Natural killer cell (primary cell): ENCODE measurements at regions of chr9 and their contacts with region 1.

Region 1: GRCh38 chr9:110217656-110218099 is 9.7 kb upstream of the C9orf152 start:
- DNase-seq: peak in 1 of 2 donors; percentile 49
- ATAC-seq: no peak
- H3K4me3 ChIP-seq: no peak overlapping the region
- H3K4me3 Mint-ChIP-seq: no peak overlapping the region
- H3K27ac ChIP-seq: no peak overlapping the region
- H3K27ac Mint-ChIP-seq: no peak overlapping the region
- H3K4me1 ChIP-seq: no peaks in the 10 kb centered on the region
- H3K4me1 Mint-ChIP-seq: no peaks in the 10 kb centered on the region
- H3K27me3 ChIP-seq: no peaks in the 10 kb centered on the region
- H3K27me3 Mint-ChIP-seq: no peaks in the 10 kb centered on the region
- CTCF ChIP-seq: peak; percentile 93

Region 2: GRCh38 chr9:109574068-109574882 is 643.4 kb before region 1 on chr9:
- intact Hi-C with region 1: loop called (anchors 10 kb)
- DNase-seq: peak in 1 of 2 donors; percentile 33
- ATAC-seq: no peak
- H3K4me3 ChIP-seq: no peak overlapping the region
- H3K4me3 Mint-ChIP-seq: no peak overlapping the region
- H3K27ac ChIP-seq: no peak overlapping the region
- H3K27ac Mint-ChIP-seq: no peak overlapping the region
- H3K4me1 ChIP-seq: no peaks in the 10 kb centered on the region
- H3K4me1 Mint-ChIP-seq: no peaks in the 10 kb centered on the region
- H3K27me3 ChIP-seq: no peaks in the 10 kb centered on the region
- H3K27me3 Mint-ChIP-seq: peaks cover 3 to 4% of the 10 kb centered on the region in 2 donors
- CTCF ChIP-seq: peak; percentile 35

Region 3: GRCh38 chr9:109903515-109904138 is 314.1 kb before region 1 on chr9:
- intact Hi-C with region 1: loop called (anchors 1 kb)
- DNase-seq: peak in 1 of 2 donors; percentile 80
- ATAC-seq: peak in 2 of 3 donors; percentile 29 to 64
- H3K4me3 ChIP-seq: no peak overlapping the region
- H3K4me3 Mint-ChIP-seq: no peak overlapping the region
- H3K27ac ChIP-seq: no peak overlapping the region
- H3K27ac Mint-ChIP-seq: no peak overlapping the region
- H3K4me1 ChIP-seq: no peaks in the 10 kb centered on the region
- H3K4me1 Mint-ChIP-seq: no peaks in the 10 kb centered on the region
- H3K27me3 ChIP-seq: no peaks in the 10 kb centered on the region
- H3K27me3 Mint-ChIP-seq: peaks cover 4 to 20% of the 10 kb centered on the region in 2 donors
- CTCF ChIP-seq: peak; percentile 53

Region 4: GRCh38 chr9:110069326-110070248 is 148.1 kb before region 1 on chr9:
- intact Hi-C with region 1: no loop called
- DNase-seq: no peak
- ATAC-seq: peak in 2 of 3 donors; percentile 21 to 82
- H3K4me3 ChIP-seq: no peak overlapping the region
- H3K4me3 Mint-ChIP-seq: no peak overlapping the region
- H3K27ac ChIP-seq: no peak overlapping the region
- H3K27ac Mint-ChIP-seq: no peak overlapping the region
- H3K4me1 ChIP-seq: peaks cover 8% of the 10 kb centered on the region
- H3K4me1 Mint-ChIP-seq: no peaks in the 10 kb centered on the region
- H3K27me3 ChIP-seq: no peaks in the 10 kb centered on the region
- H3K27me3 Mint-ChIP-seq: no peaks in the 10 kb centered on the region
- CTCF ChIP-seq: no peak

Region 5: DNA sequence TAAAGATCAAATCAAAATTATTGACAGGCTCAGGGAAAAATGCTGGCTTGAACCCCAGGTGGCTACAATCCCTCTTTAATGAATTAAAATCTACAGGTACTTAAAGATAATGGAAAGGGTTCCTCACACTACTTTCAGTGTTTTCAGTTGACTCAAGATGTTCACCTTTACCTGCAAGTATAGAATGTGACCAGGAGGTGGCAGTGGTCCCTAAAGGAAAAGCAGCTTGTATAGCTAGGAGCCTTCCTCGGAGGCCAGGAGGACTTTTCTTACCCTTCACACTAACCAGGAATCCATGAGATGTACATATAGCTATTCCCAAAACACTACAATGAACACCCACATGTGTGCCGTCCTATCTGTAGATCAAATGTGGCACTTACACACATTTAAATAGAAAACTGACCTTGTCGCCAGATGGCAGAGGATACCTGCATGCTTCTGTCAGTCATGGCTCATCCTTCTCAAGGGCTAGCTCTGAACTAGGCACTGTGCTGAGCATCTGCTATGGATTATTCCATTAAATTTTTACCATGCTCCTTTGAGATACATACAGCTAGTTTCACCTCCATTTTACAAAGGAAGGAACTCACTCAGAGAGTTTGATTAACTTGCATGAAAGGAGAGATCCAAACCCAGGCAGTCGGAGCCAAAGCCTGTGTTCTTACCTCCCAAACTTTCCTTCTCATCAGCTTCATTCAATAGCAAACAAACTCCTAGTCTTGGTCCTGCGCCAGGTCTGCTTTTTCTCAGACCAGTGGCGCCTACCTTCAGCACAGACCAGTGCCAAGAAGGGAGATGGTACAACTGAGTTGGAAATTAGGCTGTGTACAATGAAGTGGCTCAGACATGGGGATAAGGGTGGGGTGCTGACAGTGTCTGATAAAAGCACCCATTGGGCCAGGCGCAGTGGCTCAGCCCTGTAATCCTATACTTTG is 34.2 kb before region 1 on chr9:
- intact Hi-C with region 1: loop called (anchors 2 kb)
- DNase-seq: peak in 1 of 2 donors; percentile 70
- ATAC-seq: peak; percentile 71 to 82 (median 73)
- H3K4me3 ChIP-seq: no peak overlapping the region
- H3K4me3 Mint-ChIP-seq: no peak overlapping the region
- H3K27ac ChIP-seq: no peak overlapping the region
- H3K27ac Mint-ChIP-seq: no peak overlapping the region
- H3K4me1 ChIP-seq: no peaks in the 10 kb centered on the region
- H3K4me1 Mint-ChIP-seq: peaks cover 6 to 7% of the 10 kb centered on the region in 2 donors
- H3K27me3 ChIP-seq: no peaks in the 10 kb centered on the region
- H3K27me3 Mint-ChIP-seq: no peaks in the 10 kb centered on the region
- CTCF ChIP-seq: peak; percentile 70

Region 6: DNA sequence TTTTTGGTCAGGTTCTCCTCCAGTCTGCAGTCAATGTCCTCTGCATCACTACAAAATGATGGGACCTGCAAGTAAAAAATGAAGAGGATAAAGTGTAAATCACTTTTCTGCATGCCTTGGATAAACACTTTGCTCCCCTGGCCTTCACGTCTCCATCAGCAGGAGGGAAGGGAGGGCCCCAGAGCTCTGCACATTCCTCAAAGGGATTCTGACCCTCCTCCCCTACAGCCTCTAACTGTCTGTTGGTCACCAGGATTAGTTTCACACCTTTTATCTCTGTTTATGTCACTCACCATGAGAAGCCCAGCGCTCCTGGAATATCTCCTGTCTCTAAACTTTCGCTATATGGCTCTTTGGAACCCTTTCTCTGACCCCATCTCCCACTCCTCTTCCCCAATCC is 258.6 kb after region 1 on chr9:
- intact Hi-C with region 1: no loop called
- DNase-seq: no peak
- ATAC-seq: no peak
- H3K4me3 ChIP-seq: no peak overlapping the region
- H3K4me3 Mint-ChIP-seq: no peak overlapping the region
- H3K27ac ChIP-seq: no peak overlapping the region
- H3K27ac Mint-ChIP-seq: no peak overlapping the region
- H3K4me1 ChIP-seq: no peaks in the 10 kb centered on the region
- H3K4me1 Mint-ChIP-seq: no peaks in the 10 kb centered on the region
- H3K27me3 ChIP-seq: no peaks in the 10 kb centered on the region
- H3K27me3 Mint-ChIP-seq: no peaks in the 10 kb centered on the region
- CTCF ChIP-seq: no peak